ENCODE measurements at regions of chr15 and their contacts with region 1.

Region 1: GRCh38 chr15:78437762-78438302 is at the start of gene IREB2:
- DNase-seq: peak; percentile 98
- H3K4me3 Mint-ChIP-seq: peak within 1 kb of the TSS; percentile 87
- H3K27ac Mint-ChIP-seq: peak within 1 kb of the TSS; percentile 94
- H3K4me1 Mint-ChIP-seq: peaks cover 37% of the 10 kb centered on the region
- H3K27me3 Mint-ChIP-seq: no peaks in the 10 kb centered on the region
- total RNA-seq, gene IREB2: 97.8 and 101 TPM in 2 replicates

Region 2: DNA sequence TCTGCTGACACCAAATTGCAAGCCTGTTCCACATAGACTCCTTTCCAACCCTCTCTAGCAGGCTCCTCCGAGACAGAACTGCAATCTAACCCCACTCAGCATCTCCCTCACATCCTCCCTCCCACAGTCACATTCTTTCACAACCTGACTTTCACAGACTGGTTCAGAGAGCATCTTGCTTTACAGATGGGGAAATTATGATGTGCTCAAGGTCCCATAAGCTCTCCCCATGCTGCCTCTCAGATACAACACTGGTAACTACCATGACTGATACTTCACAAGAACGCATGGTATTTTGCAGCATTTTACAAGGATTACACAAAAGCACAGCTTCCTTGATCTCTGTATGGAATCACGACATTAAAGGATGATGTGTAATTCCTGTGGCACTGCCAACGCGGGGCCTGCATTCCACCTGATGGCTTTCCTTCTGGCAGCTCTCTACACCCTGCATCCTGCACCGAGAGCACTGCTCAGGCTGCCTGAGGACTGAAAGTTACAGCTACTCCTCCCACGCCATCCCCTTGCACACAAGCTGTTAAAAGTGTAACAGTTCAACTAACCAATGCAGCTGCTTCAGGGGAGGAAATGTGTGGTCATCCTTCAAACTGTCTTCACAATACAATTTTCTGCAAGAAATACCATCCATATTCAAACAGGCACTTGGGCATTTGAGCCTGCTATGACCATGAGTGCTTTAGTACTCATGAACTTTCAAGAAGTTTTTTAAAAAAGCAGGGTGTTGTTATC is 388.0 kb before region 1 on chr15:
- intact Hi-C with region 1: loop called (anchors 10 kb)
- DNase-seq: peak; percentile 57
- H3K4me3 Mint-ChIP-seq: peak overlapping the region; percentile 72
- H3K27ac Mint-ChIP-seq: peak overlapping the region; percentile 98
- H3K4me1 Mint-ChIP-seq: peaks cover 93% of the 10 kb centered on the region
- H3K27me3 Mint-ChIP-seq: no peaks in the 10 kb centered on the region

Region 3: GRCh38 chr15:78204351-78205309 is 233.2 kb before region 1 on chr15:
- intact Hi-C with region 1: no loop called
- DNase-seq: no peak
- H3K4me3 Mint-ChIP-seq: no peak overlapping the region
- H3K27ac Mint-ChIP-seq: no peak overlapping the region
- H3K4me1 Mint-ChIP-seq: no peaks in the 10 kb centered on the region
- H3K27me3 Mint-ChIP-seq: peaks cover 3% of the 10 kb centered on the region

Region 4: GRCh38 chr15:78299101-78299930 is 138.5 kb before region 1 on chr15 and contains the start of gene SKIC8:
- intact Hi-C with region 1: loop called (anchors 5 kb)
- DNase-seq: peak; percentile 90
- H3K4me3 Mint-ChIP-seq: peak within 1 kb of the TSS; percentile 98
- H3K27ac Mint-ChIP-seq: peak within 1 kb of the TSS; percentile 92
- H3K4me1 Mint-ChIP-seq: peaks cover 13% of the 10 kb centered on the region
- H3K27me3 Mint-ChIP-seq: no peaks in the 10 kb centered on the region
- total RNA-seq, gene SKIC8: 51.2 and 51.8 TPM in 2 replicates

Region 5: DNA sequence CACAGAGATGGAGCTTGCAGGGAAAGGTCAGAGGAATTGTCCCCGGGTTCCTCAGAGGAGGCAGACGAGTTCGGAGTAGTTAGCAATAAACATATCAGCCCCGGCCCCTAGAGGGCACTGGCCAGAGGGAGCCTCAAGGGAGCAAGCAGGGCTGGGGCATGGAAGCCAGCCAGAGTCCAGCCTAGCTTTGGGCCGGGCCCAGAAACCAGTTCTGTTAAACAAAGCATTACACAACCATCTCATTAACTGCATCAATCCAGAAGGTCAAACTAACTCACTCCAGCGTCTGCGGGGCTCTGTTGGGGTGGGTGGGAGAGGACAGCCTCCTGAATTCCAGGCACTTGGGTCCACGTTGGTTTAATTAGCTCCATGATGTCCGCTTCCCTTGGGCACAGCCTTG is 40.9 kb before region 1 on chr15:
- intact Hi-C with region 1: no loop called
- DNase-seq: no peak
- H3K4me3 Mint-ChIP-seq: no peak overlapping the region
- H3K27ac Mint-ChIP-seq: no peak overlapping the region
- H3K4me1 Mint-ChIP-seq: no peaks in the 10 kb centered on the region
- H3K27me3 Mint-ChIP-seq: no peaks in the 10 kb centered on the region

Region 6: GRCh38 chr15:78506971-78507830 is 69.4 kb after region 1 on chr15 and contains the start of gene HYKK:
- intact Hi-C with region 1: loop called (anchors 5 kb)
- DNase-seq: peak; percentile 74
- H3K4me3 Mint-ChIP-seq: peak within 1 kb of the TSS; percentile 88
- H3K27ac Mint-ChIP-seq: no peak within 1 kb of the TSS
- H3K4me1 Mint-ChIP-seq: peaks cover 16% of the 10 kb centered on the region
- H3K27me3 Mint-ChIP-seq: peaks cover 23% of the 10 kb centered on the region
- total RNA-seq, gene HYKK: 0.74 and 0.89 TPM in 2 replicates

Region 7: GRCh38 chr15:78872972-78873792 is 435.4 kb after region 1 on chr15:
- intact Hi-C with region 1: loop called (anchors 5 kb)
- DNase-seq: peak; percentile 89
- H3K4me3 Mint-ChIP-seq: peak overlapping the region; percentile 97
- H3K27ac Mint-ChIP-seq: peak overlapping the region; percentile 100
- H3K4me1 Mint-ChIP-seq: peaks cover 30% of the 10 kb centered on the region
- H3K27me3 Mint-ChIP-seq: no peaks in the 10 kb centered on the region

Region 8: GRCh38 chr15:78927077-78927784 is 489.4 kb after region 1 on chr15:
- intact Hi-C with region 1: no loop called
- DNase-seq: no peak
- H3K4me3 Mint-ChIP-seq: no peak overlapping the region
- H3K27ac Mint-ChIP-seq: no peak overlapping the region
- H3K4me1 Mint-ChIP-seq: peaks cover 4% of the 10 kb centered on the region
- H3K27me3 Mint-ChIP-seq: no peaks in the 10 kb centered on the region